ENCODE measurements at regions of chr1 and their contacts with region 1.

Region 1: DNA sequence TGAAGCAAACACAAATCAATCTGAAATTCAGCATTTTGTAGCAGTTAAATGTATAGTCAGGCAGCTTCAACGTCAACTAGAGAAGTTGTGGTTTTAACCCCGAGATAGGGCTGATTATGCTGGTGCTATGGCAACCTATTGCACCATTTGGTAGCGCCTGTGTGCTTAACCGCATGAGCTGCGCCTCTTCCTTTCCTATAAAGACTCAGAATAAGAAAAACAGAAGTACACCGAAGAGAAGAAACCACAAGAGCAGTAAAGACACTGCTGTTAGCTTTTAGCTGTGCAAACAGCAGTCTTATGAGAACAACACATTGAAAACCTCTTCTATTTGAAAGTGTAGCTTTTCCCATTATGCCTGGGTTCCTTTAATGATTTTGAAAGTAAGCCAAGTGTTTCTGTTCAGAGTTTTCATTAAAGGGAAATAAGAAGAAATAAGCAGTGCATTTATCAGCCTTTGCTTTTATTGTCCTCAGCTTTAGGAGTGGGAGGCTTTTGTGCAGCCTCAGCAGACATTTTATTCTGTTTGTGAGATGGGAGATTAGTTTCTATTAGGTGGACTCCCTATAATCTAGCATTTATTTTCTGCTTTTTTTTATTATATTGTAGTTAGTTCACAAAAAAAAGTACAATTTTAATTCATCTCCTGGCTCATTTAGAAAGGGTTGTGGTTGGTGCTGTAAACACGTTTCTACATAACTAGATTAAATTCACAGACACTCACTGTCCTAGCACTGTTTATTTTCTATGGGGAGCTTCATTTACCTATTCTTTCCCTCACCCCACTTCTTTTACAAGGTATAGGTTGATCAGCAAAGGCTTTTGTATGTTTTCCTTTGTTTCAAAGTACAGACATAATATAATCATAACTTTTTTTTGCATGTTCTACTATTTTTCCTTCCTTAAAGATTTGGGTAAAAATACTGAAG is 43.3 kb downstream of the PTPRC start:
- DNase-seq: peak; percentile 57 to 98 (median 79)
- ATAC-seq: peak; percentile 64
- H3K4me3 ChIP-seq: peak overlapping the region; percentile 9 to 18
- H3K4me3 Mint-ChIP-seq: peak overlapping the region; percentile 68
- H3K27ac ChIP-seq: peak overlapping the region; percentile 66 to 97
- H3K27ac Mint-ChIP-seq: peak overlapping the region; percentile 93
- H3K4me1 ChIP-seq: peaks cover 92% of the 10 kb centered on the region
- H3K4me1 Mint-ChIP-seq: peaks cover 84% of the 10 kb centered on the region
- H3K27me3 ChIP-seq: no peaks in the 10 kb centered on the region
- H3K27me3 Mint-ChIP-seq: no peaks in the 10 kb centered on the region
- CTCF ChIP-seq: no peak

Region 2: GRCh38 chr1:198047913-198048312 is 634.2 kb before region 1 on chr1:
- CTCF ChIA-PET with region 1: no interaction called
- POLR2A ChIA-PET with region 1: no interaction called
- intact Hi-C with region 1: no loop called
- DNase-seq: peak in 2 of 9 experiments; percentile 9 to 16
- ATAC-seq: no peak
- H3K4me3 ChIP-seq: no peak overlapping the region
- H3K4me3 Mint-ChIP-seq: no peak overlapping the region
- H3K27ac ChIP-seq: no peak overlapping the region
- H3K27ac Mint-ChIP-seq: no peak overlapping the region
- H3K4me1 ChIP-seq: no peaks in the 10 kb centered on the region
- H3K4me1 Mint-ChIP-seq: peaks cover 10% of the 10 kb centered on the region
- H3K27me3 ChIP-seq: no peaks in the 10 kb centered on the region
- H3K27me3 Mint-ChIP-seq: no peaks in the 10 kb centered on the region
- CTCF ChIP-seq: no peak

Region 3: DNA sequence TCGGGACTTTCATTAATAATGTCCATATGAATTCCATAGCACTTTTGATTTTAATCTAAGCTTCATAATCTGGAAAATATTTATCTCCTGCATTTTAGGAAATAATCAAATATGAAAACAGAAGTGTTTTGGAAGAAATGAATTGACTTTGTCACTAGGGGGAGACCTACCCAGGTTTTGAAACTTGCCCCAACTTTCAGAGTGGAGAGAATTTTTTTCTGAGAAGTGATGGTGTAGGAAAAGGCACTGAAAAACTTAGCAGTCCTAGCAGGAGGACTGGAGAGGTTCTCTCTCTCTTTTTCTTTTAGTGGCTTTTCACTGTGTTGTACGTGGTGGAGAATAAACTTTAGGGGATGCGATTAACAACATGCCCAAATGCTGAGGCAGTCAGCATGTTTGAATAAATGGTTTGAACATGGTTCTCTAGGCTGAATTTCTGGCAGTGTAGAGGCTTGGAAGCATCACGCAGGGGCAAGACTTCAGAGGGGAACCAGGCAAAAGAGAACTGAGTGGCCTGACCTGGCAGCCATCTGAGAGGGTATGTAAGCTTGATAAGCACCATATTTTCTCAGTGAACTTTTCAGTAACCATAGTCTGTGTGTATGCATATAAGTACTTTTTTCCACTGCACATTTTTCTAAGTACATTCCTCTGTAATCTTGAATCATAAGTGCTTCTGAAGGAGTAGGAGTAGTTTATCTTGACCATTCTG is 593.6 kb before region 1 on chr1:
- CTCF ChIA-PET with region 1: no interaction called
- POLR2A ChIA-PET with region 1: no interaction called
- intact Hi-C with region 1: loop called (anchors 5 kb)
- DNase-seq: peak in 4 of 9 experiments; percentile 7 to 66 (median 30)
- ATAC-seq: peak; percentile 51
- H3K4me3 ChIP-seq: no peak overlapping the region
- H3K4me3 Mint-ChIP-seq: no peak overlapping the region
- H3K27ac ChIP-seq: no peak overlapping the region
- H3K27ac Mint-ChIP-seq: no peak overlapping the region
- H3K4me1 ChIP-seq: no peaks in the 10 kb centered on the region
- H3K4me1 Mint-ChIP-seq: peaks cover 3% of the 10 kb centered on the region
- H3K27me3 ChIP-seq: no peaks in the 10 kb centered on the region
- H3K27me3 Mint-ChIP-seq: no peaks in the 10 kb centered on the region
- CTCF ChIP-seq: peak; percentile 78

Region 4: DNA sequence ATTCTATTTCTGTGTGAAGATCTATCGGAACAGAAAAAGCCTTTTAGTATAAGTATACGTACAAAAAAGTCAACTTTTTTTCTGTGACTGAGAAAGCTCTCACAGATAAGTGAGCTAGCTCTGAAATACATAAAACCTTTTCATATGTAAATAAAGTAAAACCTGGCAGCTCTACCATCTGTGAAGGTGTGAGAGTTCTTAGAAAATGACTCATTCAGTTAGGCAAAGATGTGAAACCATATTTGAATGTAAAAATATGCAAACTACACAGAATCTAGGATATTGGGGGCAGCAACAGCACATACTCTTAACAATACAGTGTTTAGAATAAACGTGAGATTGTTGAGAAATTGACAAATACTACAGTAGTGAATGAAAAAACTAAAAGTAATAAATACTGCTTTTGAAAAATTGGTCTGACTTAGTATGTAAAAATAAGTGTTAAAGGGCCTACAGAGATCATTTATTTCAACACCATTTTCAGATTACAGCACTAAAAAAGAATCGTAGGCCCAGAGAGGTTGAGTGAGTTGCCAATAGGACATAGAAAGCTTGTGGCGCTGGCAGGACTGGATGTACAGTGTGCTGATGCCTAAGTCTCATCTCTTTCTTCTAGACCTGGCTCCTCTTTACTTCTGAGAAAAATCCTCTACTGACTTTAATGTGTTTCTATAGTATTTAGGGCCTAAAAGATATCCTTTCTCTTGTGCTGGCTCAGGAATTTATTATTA is 161.4 kb before region 1 on chr1:
- CTCF ChIA-PET with region 1: interaction called, 9 read pairs
- POLR2A ChIA-PET with region 1: interaction called, 9 read pairs
- intact Hi-C with region 1: loop called (anchors 1 to 2 kb)
- DNase-seq: peak in 2 of 9 experiments; percentile 57 to 73
- ATAC-seq: peak; percentile 57
- H3K4me3 ChIP-seq: peak overlapping the region; percentile 11 to 30
- H3K4me3 Mint-ChIP-seq: peak overlapping the region; percentile 72
- H3K27ac ChIP-seq: peak overlapping the region; percentile 6 to 75
- H3K27ac Mint-ChIP-seq: peak overlapping the region; percentile 89
- H3K4me1 ChIP-seq: peaks cover 58% of the 10 kb centered on the region
- H3K4me1 Mint-ChIP-seq: peaks cover 72% of the 10 kb centered on the region
- H3K27me3 ChIP-seq: no peaks in the 10 kb centered on the region
- H3K27me3 Mint-ChIP-seq: no peaks in the 10 kb centered on the region
- CTCF ChIP-seq: no peak

Region 5: DNA sequence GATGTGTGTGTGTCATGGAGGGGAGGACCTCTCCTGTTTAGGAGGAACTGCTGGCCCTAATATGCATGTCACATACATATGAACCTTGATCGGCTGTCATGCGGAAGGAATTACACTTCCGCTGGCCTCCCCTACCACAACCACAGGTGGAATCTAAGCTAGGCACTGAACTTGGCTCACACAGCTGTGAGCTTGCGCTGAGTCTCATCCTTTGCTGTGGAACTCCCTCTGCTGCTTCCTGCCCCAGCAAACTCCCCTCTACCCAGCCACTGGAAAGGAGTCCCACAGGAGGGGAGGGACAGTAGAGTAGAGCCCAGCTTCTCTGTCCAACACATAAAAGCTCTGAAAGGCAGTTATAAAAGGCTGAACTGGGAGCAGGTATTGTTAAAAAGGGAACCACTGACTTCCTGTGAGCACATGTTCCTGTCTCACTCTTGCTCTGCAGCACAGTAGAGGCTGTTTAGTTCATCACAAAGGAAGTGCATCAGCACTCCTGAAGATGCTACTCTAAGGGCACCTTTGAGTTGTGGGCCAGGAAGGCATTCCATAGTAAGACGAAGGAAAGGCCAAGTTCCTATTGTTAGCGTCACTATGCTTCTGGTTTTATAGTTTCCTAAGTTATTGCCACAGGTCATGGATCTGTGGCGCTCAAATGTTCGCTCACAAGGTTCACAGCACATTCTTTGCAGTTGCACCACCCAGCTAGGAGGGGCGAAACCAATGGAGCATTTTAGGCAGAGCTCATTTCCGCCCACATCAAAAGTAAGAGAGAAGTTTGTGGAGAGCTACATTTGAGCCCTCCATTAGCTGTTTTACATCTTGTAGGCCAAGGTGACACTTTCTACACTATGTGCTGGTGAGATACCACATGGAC is 60.9 kb before region 1 on chr1:
- CTCF ChIA-PET with region 1: interaction called, 84 read pairs
- POLR2A ChIA-PET with region 1: interaction called, 68 read pairs
- intact Hi-C with region 1: loop called (anchors 2 kb)
- DNase-seq: peak; percentile 29 to 91 (median 67)
- ATAC-seq: peak; percentile 76
- H3K4me3 ChIP-seq: peak overlapping the region; percentile 34 to 38
- H3K4me3 Mint-ChIP-seq: peak overlapping the region; percentile 78
- H3K27ac ChIP-seq: peak overlapping the region; percentile 68 to 72
- H3K27ac Mint-ChIP-seq: peak overlapping the region; percentile 93
- H3K4me1 ChIP-seq: peaks cover 75% of the 10 kb centered on the region
- H3K4me1 Mint-ChIP-seq: peaks cover 91% of the 10 kb centered on the region
- H3K27me3 ChIP-seq: no peaks in the 10 kb centered on the region
- H3K27me3 Mint-ChIP-seq: no peaks in the 10 kb centered on the region
- CTCF ChIP-seq: no peak

Region 6: DNA sequence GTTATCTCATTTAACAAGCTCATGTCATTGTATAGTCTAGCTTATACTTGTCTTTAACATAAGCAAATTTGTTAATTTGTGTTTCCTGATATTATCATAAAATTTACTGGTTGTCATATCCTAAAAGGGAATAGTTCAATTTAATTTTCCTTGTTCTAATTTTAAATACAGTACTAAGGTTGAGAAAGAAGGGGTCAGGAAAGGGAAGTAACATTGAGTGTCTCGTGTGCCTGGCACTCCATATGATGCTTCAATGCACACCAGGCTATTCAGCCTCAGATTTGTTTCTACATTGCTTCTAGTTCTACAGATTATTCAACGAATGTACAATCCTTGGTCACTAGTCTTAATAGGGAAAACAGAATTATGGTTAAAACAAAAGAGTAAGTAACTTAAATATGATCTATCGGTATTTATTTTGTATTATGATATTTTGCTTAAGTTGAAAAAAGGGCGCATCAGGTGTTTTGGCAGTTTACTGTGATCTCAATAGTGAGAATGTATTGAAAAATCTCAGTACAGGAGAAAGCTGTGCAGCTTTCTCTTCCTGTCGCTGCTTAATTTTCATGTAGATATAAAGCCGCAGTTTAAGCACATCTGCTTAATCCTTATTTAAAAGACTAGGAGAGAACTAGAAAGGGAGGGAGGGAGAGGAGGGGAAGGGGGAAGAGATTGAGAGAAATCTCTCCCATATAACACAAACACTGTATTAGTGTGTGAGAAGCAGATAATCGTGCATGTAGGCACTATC is 30.3 kb before region 1 on chr1:
- CTCF ChIA-PET with region 1: interaction called, 5 read pairs
- POLR2A ChIA-PET with region 1: interaction called, 42 read pairs
- intact Hi-C with region 1: loop called (anchors 1 to 2 kb)
- DNase-seq: peak in 1 of 9 experiments; percentile 58
- ATAC-seq: peak; percentile 13
- H3K4me3 ChIP-seq: peak overlapping the region; percentile 29 to 30
- H3K4me3 Mint-ChIP-seq: peak overlapping the region; percentile 75
- H3K27ac ChIP-seq: peak overlapping the region; percentile 41 to 97
- H3K27ac Mint-ChIP-seq: peak overlapping the region; percentile 95
- H3K4me1 ChIP-seq: peaks cover 79% of the 10 kb centered on the region
- H3K4me1 Mint-ChIP-seq: peaks cover 73% of the 10 kb centered on the region
- H3K27me3 ChIP-seq: no peaks in the 10 kb centered on the region
- H3K27me3 Mint-ChIP-seq: no peaks in the 10 kb centered on the region
- CTCF ChIP-seq: no peak

Region 7: DNA sequence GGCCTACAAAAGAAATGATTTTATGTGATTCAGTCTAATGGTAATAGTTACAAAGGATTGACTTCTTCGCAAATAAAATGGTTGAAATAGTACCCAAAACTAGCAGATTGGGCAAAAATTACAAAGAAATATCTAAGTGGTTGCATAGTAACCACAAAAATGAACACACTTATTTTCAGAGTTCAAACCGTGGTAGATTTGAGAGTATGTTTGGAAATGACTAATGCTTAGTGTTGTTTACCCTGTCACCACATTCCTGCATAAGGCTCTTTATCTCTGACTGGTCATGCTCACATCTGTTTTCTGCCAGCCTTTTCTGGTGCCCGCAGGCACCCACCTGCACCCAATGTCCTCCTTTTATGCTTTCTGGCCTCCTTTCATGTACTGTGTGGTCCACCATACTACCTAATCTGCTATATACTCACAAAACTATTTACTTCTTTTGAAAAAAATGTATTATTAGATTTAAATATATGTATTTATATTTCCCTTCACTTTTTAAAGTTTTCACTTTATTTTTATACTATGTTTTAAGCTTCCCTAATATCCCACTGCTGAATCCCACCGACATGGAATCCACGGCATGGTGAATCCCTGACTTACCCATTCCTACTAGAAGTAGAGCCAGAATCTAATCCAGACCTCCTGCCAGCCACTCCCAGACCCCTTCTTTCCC is 12.9 kb before region 1 on chr1:
- CTCF ChIA-PET with region 1: interaction called, 8 read pairs
- POLR2A ChIA-PET with region 1: interaction called, 27 read pairs
- intact Hi-C with region 1: loop called in 1 of 2 experiments (anchors 1 kb)
- DNase-seq: peak in 5 of 9 experiments; percentile 40 to 85 (median 56)
- ATAC-seq: peak; percentile 77
- H3K4me3 ChIP-seq: peak overlapping the region in 1 of 2 experiments; percentile 8
- H3K4me3 Mint-ChIP-seq: peak overlapping the region; percentile 61
- H3K27ac ChIP-seq: peak overlapping the region; percentile 54 to 97
- H3K27ac Mint-ChIP-seq: peak overlapping the region; percentile 96
- H3K4me1 ChIP-seq: peaks cover 91% of the 10 kb centered on the region
- H3K4me1 Mint-ChIP-seq: peaks cover 90% of the 10 kb centered on the region
- H3K27me3 ChIP-seq: no peaks in the 10 kb centered on the region
- H3K27me3 Mint-ChIP-seq: no peaks in the 10 kb centered on the region
- CTCF ChIP-seq: no peak